B cell (primary cell): ENCODE measurements at regions of chr4 and their contacts with region 1.

Region 1: DNA sequence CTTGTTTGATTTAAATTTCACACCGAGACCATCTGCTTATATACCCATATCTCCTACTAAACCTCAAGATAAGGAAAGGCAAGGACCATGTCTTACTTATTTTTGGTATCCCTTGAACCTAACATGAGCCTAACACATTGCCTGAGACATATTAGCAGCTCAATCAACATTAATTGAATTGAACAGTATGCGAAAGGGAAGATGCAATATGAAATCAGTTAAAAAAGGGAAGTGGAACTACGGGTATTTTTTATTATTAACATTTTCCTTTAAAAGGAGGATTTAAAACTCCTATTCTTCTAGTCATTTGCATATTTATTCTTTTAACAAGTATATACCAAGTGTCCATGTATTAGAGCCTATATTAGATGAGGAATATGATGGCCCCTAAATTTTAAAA is 197.0 kb downstream of the CAMK2D start:
- DNase-seq: no peak
- ATAC-seq: peak; percentile 54
- H3K4me3 ChIP-seq: peak overlapping the region in 3 of 5 experiments; percentile 10 to 54 (median 19)
- H3K4me3 Mint-ChIP-seq: peak overlapping the region; percentile 87
- H3K27ac ChIP-seq: peak overlapping the region; percentile 74 to 79
- H3K27ac Mint-ChIP-seq: peak overlapping the region; percentile 98
- H3K4me1 ChIP-seq: peaks cover 60 to 88% of the 10 kb centered on the region in 2 donors
- H3K4me1 Mint-ChIP-seq: peaks cover 74% of the 10 kb centered on the region
- H3K27me3 ChIP-seq: no peaks in the 10 kb centered on the region
- H3K27me3 Mint-ChIP-seq: no peaks in the 10 kb centered on the region
- CTCF ChIP-seq: no peak

Region 2: DNA sequence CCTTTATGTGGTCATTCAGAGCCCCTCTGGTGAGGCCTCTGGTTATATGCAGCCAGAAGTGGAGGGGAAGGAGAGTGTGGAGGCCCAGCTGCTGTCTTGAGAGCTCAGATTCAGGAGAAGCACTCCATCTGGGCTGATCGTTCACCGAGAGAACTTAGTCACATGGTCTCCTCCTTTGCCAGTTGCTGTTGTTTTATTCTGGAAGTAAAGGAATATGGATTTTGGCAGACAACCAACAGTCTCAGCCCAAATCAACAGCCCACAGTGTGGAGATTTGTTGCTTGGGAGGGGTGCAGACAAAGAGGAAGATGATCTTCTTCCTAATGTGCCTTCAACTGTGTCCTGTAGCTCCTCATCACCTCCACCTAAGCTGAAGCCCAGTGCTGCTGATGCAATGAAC is 159.7 kb before region 1 on chr4:
- CTCF ChIA-PET with region 1: no interaction called
- POLR2A ChIA-PET with region 1: no interaction called
- intact Hi-C with region 1: no loop called
- DNase-seq: no peak
- ATAC-seq: no peak
- H3K4me3 ChIP-seq: no peak overlapping the region
- H3K4me3 Mint-ChIP-seq: no peak overlapping the region
- H3K27ac ChIP-seq: no peak overlapping the region
- H3K27ac Mint-ChIP-seq: no peak overlapping the region
- H3K4me1 ChIP-seq: no peaks in the 10 kb centered on the region
- H3K4me1 Mint-ChIP-seq: no peaks in the 10 kb centered on the region
- H3K27me3 ChIP-seq: no peaks in the 10 kb centered on the region
- H3K27me3 Mint-ChIP-seq: peaks cover 9% of the 10 kb centered on the region
- CTCF ChIP-seq: no peak

Region 3: DNA sequence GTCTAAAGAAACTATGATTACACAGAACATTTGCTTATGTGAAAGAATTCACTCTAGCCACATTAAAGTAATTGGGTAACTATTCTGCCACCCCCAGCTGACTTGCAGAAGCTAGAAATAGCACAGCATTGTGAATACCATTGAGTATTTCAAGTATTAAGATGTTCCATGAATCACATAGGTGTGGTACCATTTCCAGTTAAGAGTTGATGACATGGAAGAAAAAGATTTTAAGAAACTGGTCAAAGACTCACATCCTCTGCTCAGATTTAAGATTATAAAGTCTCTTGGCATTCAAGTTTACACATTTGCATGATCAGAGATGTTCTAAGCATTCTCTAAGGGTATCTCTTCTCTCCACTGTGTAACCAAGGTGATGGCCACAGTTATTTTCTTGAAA is 90.5 kb before region 1 on chr4:
- CTCF ChIA-PET with region 1: no interaction called
- POLR2A ChIA-PET with region 1: no interaction called
- intact Hi-C with region 1: no loop called
- DNase-seq: no peak
- ATAC-seq: no peak
- H3K4me3 ChIP-seq: no peak overlapping the region
- H3K4me3 Mint-ChIP-seq: no peak overlapping the region
- H3K27ac ChIP-seq: no peak overlapping the region
- H3K27ac Mint-ChIP-seq: no peak overlapping the region
- H3K4me1 ChIP-seq: no peaks in the 10 kb centered on the region
- H3K4me1 Mint-ChIP-seq: no peaks in the 10 kb centered on the region
- H3K27me3 ChIP-seq: no peaks in the 10 kb centered on the region
- H3K27me3 Mint-ChIP-seq: no peaks in the 10 kb centered on the region
- CTCF ChIP-seq: no peak

Region 4: DNA sequence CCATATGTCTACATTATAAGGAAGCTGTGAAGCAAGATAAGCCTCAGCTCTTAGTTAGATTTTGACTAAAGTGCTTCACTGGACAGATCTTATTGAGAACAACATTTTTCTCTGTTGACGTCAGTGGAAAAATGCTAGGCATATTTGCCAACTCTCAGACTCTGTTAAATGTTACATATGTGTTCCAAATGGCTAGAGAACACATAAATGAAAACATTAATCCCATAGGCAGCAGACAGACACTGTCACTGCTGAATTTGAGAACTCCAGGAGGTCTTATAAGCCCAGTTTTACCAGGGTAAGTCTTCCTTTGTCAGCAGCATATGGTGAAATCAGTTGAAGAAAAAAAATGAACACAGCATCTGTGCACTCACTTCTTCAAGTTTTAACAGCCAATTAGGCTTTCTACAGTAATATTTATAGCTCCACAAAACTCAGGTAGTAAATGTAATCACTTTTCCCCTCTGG is 10.2 kb after region 1 on chr4:
- CTCF ChIA-PET with region 1: interaction called, 14 read pairs
- POLR2A ChIA-PET with region 1: interaction called, 3 read pairs
- intact Hi-C with region 1: no loop called
- DNase-seq: no peak
- ATAC-seq: no peak
- H3K4me3 ChIP-seq: no peak overlapping the region
- H3K4me3 Mint-ChIP-seq: no peak overlapping the region
- H3K27ac ChIP-seq: peak overlapping the region; percentile 34 to 59
- H3K27ac Mint-ChIP-seq: peak overlapping the region; percentile 8
- H3K4me1 ChIP-seq: peaks cover 20 to 55% of the 10 kb centered on the region in 2 donors
- H3K4me1 Mint-ChIP-seq: peaks cover 82% of the 10 kb centered on the region
- H3K27me3 ChIP-seq: no peaks in the 10 kb centered on the region
- H3K27me3 Mint-ChIP-seq: no peaks in the 10 kb centered on the region
- CTCF ChIP-seq: no peak

Region 5: GRCh38 chr4:113593400-113594230 is 29.1 kb after region 1 on chr4:
- CTCF ChIA-PET with region 1: interaction called, 4 read pairs
- POLR2A ChIA-PET with region 1: no interaction called
- intact Hi-C with region 1: loop called (anchors 2 kb)
- DNase-seq: peak; percentile 57
- ATAC-seq: peak; percentile 82
- H3K4me3 ChIP-seq: no peak overlapping the region
- H3K4me3 Mint-ChIP-seq: peak overlapping the region; percentile 53
- H3K27ac ChIP-seq: peak overlapping the region; percentile 75 to 85
- H3K27ac Mint-ChIP-seq: peak overlapping the region; percentile 88
- H3K4me1 ChIP-seq: peaks cover 44 to 55% of the 10 kb centered on the region in 2 donors
- H3K4me1 Mint-ChIP-seq: peaks cover 71% of the 10 kb centered on the region
- H3K27me3 ChIP-seq: no peaks in the 10 kb centered on the region
- H3K27me3 Mint-ChIP-seq: no peaks in the 10 kb centered on the region
- CTCF ChIP-seq: no peak

Region 6: GRCh38 chr4:113618205-113618604 is 53.7 kb after region 1 on chr4:
- CTCF ChIA-PET with region 1: no interaction called
- POLR2A ChIA-PET with region 1: interaction called, 3 read pairs
- intact Hi-C with region 1: loop called (anchors 2 kb)
- DNase-seq: peak; percentile 25
- ATAC-seq: peak; percentile 81
- H3K4me3 ChIP-seq: peak overlapping the region in 1 of 5 experiments; percentile 18
- H3K4me3 Mint-ChIP-seq: no peak overlapping the region
- H3K27ac ChIP-seq: peak overlapping the region; percentile 43 to 75
- H3K27ac Mint-ChIP-seq: no peak overlapping the region
- H3K4me1 ChIP-seq: peaks cover 45 to 63% of the 10 kb centered on the region in 2 donors
- H3K4me1 Mint-ChIP-seq: peaks cover 51% of the 10 kb centered on the region
- H3K27me3 ChIP-seq: no peaks in the 10 kb centered on the region
- H3K27me3 Mint-ChIP-seq: no peaks in the 10 kb centered on the region
- CTCF ChIP-seq: no peak

Region 7: GRCh38 chr4:113684534-113685091 is 120.1 kb after region 1 on chr4:
- CTCF ChIA-PET with region 1: no interaction called
- POLR2A ChIA-PET with region 1: no interaction called
- intact Hi-C with region 1: loop called (anchors 5 kb)
- DNase-seq: no peak
- ATAC-seq: no peak
- H3K4me3 ChIP-seq: no peak overlapping the region
- H3K4me3 Mint-ChIP-seq: no peak overlapping the region
- H3K27ac ChIP-seq: peak overlapping the region in 1 of 2 donors; percentile 83
- H3K27ac Mint-ChIP-seq: peak overlapping the region; percentile 62
- H3K4me1 ChIP-seq: peaks cover 33 to 38% of the 10 kb centered on the region in 2 donors
- H3K4me1 Mint-ChIP-seq: peaks cover 54% of the 10 kb centered on the region
- H3K27me3 ChIP-seq: no peaks in the 10 kb centered on the region
- H3K27me3 Mint-ChIP-seq: no peaks in the 10 kb centered on the region
- CTCF ChIP-seq: no peak

Region 8: DNA sequence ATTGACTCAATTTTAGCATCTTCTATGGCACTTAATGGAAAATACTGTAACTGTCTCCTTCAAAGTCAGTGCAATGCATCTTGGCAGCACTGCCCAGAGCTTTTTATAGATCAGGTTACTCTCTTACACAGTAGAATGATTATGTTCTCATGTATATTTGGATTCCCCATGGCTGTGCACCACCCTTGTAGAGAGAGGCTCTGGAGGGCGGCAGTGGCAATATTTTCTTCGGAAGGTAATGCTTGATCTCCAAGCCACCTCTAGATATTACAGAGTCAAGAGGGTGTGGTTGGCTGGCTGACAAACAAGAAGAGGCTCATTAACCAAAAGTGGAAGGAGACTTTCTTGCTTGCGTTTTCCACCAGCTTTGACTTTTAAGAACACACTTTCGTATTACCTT is 487.7 kb after region 1 on chr4:
- CTCF ChIA-PET with region 1: no interaction called
- POLR2A ChIA-PET with region 1: no interaction called
- intact Hi-C with region 1: no loop called
- DNase-seq: no peak
- ATAC-seq: no peak
- H3K4me3 ChIP-seq: no peak overlapping the region
- H3K4me3 Mint-ChIP-seq: no peak overlapping the region
- H3K27ac ChIP-seq: no peak overlapping the region
- H3K27ac Mint-ChIP-seq: no peak overlapping the region
- H3K4me1 ChIP-seq: no peaks in the 10 kb centered on the region
- H3K4me1 Mint-ChIP-seq: no peaks in the 10 kb centered on the region
- H3K27me3 ChIP-seq: no peaks in the 10 kb centered on the region
- H3K27me3 Mint-ChIP-seq: peaks cover 7% of the 10 kb centered on the region
- CTCF ChIP-seq: no peak

Region 9: GRCh38 chr4:114136069-114136468 is 571.6 kb after region 1 on chr4:
- CTCF ChIA-PET with region 1: no interaction called
- POLR2A ChIA-PET with region 1: no interaction called
- intact Hi-C with region 1: no loop called
- DNase-seq: no peak
- ATAC-seq: no peak
- H3K4me3 ChIP-seq: no peak overlapping the region
- H3K4me3 Mint-ChIP-seq: no peak overlapping the region
- H3K27ac ChIP-seq: no peak overlapping the region
- H3K27ac Mint-ChIP-seq: no peak overlapping the region
- H3K4me1 ChIP-seq: no peaks in the 10 kb centered on the region
- H3K4me1 Mint-ChIP-seq: no peaks in the 10 kb centered on the region
- H3K27me3 ChIP-seq: no peaks in the 10 kb centered on the region
- H3K27me3 Mint-ChIP-seq: peaks cover 5% of the 10 kb centered on the region
- CTCF ChIP-seq: no peak